Activated CD4-positive, alpha-beta memory T cell treated with anti-CD3 and anti-CD28 coated beads, Interleukin-2, amount 10 ng/mL, durations not matched to agents 7 days and 5 days (primary cell): ENCODE measurements at regions of chr1 and their contacts with region 1.

Region 1: DNA sequence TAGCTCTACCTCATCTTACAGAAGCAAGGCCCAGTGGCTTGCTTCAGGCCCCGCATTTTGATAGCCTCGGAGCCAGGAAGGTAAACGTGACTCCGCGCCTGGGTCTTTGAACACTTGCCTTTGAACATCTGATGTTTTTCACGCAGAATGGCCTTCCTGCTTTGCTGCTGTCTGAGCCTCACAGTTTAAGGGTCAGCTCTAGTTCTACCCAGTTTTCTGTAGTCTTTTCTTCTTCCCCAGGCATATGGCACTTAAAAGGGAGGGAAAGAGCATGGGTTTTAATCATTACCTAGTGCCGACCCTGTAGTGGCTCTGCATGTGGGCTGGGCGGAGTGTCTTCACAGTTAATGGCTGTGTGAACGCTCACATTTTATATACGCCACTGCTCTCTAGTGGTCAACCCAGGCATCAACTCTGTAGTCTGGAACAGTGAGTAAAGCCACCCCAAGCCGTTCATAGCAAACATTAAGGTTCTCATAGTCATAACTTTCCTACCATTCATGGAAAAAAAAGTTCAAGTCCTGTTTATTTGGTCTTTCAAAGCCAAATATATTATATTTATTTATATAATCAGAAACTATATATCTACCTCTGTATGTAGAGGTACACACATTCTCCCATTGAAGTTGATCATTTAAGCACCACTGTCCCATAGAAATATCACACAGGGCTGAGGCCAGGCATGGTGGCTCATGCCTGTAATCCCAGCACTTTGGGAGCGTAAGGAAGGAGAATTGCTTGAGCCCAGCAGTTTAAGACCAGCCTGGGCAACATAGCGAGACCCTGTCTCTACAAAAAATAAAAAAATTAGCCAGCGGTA is 78.1 kb downstream of the IER5 start:
- DNase-seq: peak; percentile 76
- H3K4me3 Mint-ChIP-seq: no peak overlapping the region
- H3K27ac Mint-ChIP-seq: no peak overlapping the region
- H3K4me1 Mint-ChIP-seq: peaks cover 5% of the 10 kb centered on the region
- H3K27me3 Mint-ChIP-seq: peaks cover 17% of the 10 kb centered on the region

Region 2: GRCh38 chr1:180881806-180882509 is 284.6 kb before region 1 on chr1:
- CTCF ChIA-PET with region 1: interaction called, 21 read pairs
- POLR2A ChIA-PET with region 1: interaction called, 3 read pairs
- DNase-seq: no peak
- H3K4me3 Mint-ChIP-seq: no peak overlapping the region
- H3K27ac Mint-ChIP-seq: no peak overlapping the region
- H3K4me1 Mint-ChIP-seq: no peaks in the 10 kb centered on the region
- H3K27me3 Mint-ChIP-seq: no peaks in the 10 kb centered on the region

Region 3: GRCh38 chr1:181126938-181127587 is 39.5 kb before region 1 on chr1:
- CTCF ChIA-PET with region 1: no interaction called
- POLR2A ChIA-PET with region 1: no interaction called
- DNase-seq: no peak
- H3K4me3 Mint-ChIP-seq: no peak overlapping the region
- H3K27ac Mint-ChIP-seq: no peak overlapping the region
- H3K4me1 Mint-ChIP-seq: peaks cover 42% of the 10 kb centered on the region
- H3K27me3 Mint-ChIP-seq: peaks cover 3% of the 10 kb centered on the region

Region 4: GRCh38 chr1:181152892-181153633 is 13.5 kb before region 1 on chr1:
- CTCF ChIA-PET with region 1: interaction called, 11 read pairs
- POLR2A ChIA-PET with region 1: interaction called, 22 read pairs
- DNase-seq: no peak
- H3K4me3 Mint-ChIP-seq: no peak overlapping the region
- H3K27ac Mint-ChIP-seq: no peak overlapping the region
- H3K4me1 Mint-ChIP-seq: peaks cover 51% of the 10 kb centered on the region
- H3K27me3 Mint-ChIP-seq: peaks cover 28% of the 10 kb centered on the region